H1 (cell line): ENCODE measurements at regions of chr10 and their contacts with region 1.

Region 1: GRCh38 chr10:101214446-101215396 is 14.5 kb downstream of the LBX1 start:
- DNase-seq: peak in 1 of 2 experiments; percentile 95
- H3K4me3 ChIP-seq: peak overlapping the region in 3 of 4 experiments; percentile 15 to 59 (median 20); a peak in 4 of 8 replicates
- H3K27ac ChIP-seq: no peak overlapping the region
- H3K4me1 ChIP-seq: peaks cover 0 to 17% (median 9%) of the 10 kb centered on the region in 4 experiments; a peak in 5 of 7 replicates
- H3K27me3 ChIP-seq: peaks cover 55 to 77% (median 68%) of the 10 kb centered on the region in 4 experiments
- CTCF ChIP-seq: peak in 2 of 3 experiments; percentile 88 to 96; a peak in 3 of 4 replicates
- EP300 ChIP-seq: no peak
- POLR2A ChIP-seq: no peak
- RAD21 ChIP-seq: peak; percentile 92 to 93

Region 2: DNA sequence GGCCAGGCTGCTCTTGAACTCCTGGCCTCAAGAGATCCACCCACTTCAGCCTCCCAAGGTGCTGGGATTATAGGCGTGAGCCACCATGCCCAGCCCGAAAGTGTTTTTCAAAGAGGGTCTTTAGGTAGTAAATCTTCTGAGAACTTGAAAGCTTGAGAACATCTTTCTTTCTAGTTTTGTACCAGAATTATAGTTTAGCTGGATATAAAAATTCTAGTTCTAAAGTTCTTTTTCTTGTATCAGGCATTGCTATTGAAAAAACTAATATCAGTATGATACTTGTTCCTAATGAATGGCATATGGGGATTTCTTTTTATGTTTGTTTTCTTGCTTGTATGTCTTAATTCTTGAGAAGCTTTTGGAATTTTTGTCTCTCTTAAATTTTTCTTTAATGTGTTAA is 40.4 kb before region 1 on chr10:
- CTCF ChIA-PET with region 1: interaction called, 23 read pairs
- POLR2A ChIA-PET with region 1: no interaction called
- DNase-seq: no peak
- H3K4me3 ChIP-seq: no peak overlapping the region
- H3K27ac ChIP-seq: no peak overlapping the region
- H3K4me1 ChIP-seq: no peaks in the 10 kb centered on the region
- H3K27me3 ChIP-seq: no peaks in the 10 kb centered on the region; a peak in 2 of 7 replicates
- CTCF ChIP-seq: no peak
- EP300 ChIP-seq: no peak
- POLR2A ChIP-seq: no peak
- RAD21 ChIP-seq: no peak

Region 3: DNA sequence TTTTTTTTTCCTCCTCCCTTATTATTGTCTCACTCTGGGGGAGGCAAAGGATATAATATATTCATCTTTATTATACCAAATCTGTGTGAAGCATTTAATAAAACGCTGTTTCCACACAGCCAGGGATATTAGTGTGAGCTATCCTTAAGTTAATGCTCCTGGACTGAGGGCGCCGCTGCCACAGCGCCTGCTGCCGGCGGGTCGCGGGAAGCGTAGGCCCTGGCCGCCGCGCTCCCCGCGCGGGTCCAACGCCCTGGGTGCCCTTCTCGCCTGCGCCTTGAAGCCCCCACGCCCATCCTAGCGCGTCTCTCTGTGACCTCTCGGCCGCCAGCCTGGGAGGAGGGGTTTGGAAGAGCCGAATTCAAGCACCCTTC is 24.0 kb after region 1 on chr10:
- CTCF ChIA-PET with region 1: interaction called, 113 read pairs
- POLR2A ChIA-PET with region 1: no interaction called
- DNase-seq: no peak
- H3K4me3 ChIP-seq: no peak overlapping the region
- H3K27ac ChIP-seq: no peak overlapping the region
- H3K4me1 ChIP-seq: peaks cover 0 to 14% (median 6%) of the 10 kb centered on the region in 4 experiments; a peak in 6 of 7 replicates
- H3K27me3 ChIP-seq: peaks cover 69 to 84% (median 77%) of the 10 kb centered on the region in 4 experiments
- CTCF ChIP-seq: peak; percentile 80 to 94 (median 88)
- EP300 ChIP-seq: no peak
- POLR2A ChIP-seq: no peak
- RAD21 ChIP-seq: peak; percentile 25 to 57; a peak in 3 of 4 replicates

Region 4: DNA sequence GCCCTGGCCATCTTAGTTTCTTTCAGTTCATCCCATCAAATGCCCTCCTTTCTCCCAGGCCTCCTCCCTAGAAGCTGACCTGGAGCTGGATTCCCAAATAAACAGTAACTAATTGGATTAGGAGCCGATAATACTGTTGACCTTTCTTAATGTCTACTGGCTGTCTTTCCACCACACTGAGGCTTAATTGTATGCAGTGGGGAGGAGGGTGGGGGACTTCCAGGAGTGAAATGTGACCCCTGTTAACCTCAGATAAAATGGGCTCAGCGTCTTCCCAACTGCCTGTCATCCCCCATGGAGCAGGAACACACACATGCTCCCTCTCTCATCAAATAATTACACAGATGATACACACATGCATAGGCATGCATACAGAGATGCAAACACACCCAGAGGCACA is 68.2 kb after region 1 on chr10:
- CTCF ChIA-PET with region 1: interaction called, 266 read pairs
- POLR2A ChIA-PET with region 1: no interaction called
- DNase-seq: no peak
- H3K4me3 ChIP-seq: no peak overlapping the region
- H3K27ac ChIP-seq: no peak overlapping the region
- H3K4me1 ChIP-seq: peaks cover 26 to 38% (median 29%) of the 10 kb centered on the region in 4 experiments
- H3K27me3 ChIP-seq: peaks cover 26 to 60% (median 52%) of the 10 kb centered on the region in 4 experiments
- CTCF ChIP-seq: no peak
- EP300 ChIP-seq: no peak
- POLR2A ChIP-seq: no peak
- RAD21 ChIP-seq: no peak

Region 5: GRCh38 chr10:101441541-101442455 is 227.1 kb after region 1 on chr10:
- CTCF ChIA-PET with region 1: interaction called, 46 read pairs
- POLR2A ChIA-PET with region 1: no interaction called
- DNase-seq: no peak
- H3K4me3 ChIP-seq: no peak overlapping the region
- H3K27ac ChIP-seq: no peak overlapping the region
- H3K4me1 ChIP-seq: peaks cover 0 to under 1% (median 0%) of the 10 kb centered on the region in 4 experiments; a peak in 1 of 7 replicates
- H3K27me3 ChIP-seq: no peaks in the 10 kb centered on the region
- CTCF ChIP-seq: peak in 2 of 3 experiments; percentile 80 to 83; a peak in 3 of 4 replicates
- EP300 ChIP-seq: no peak
- POLR2A ChIP-seq: no peak
- RAD21 ChIP-seq: peak; percentile 93 to 95